ENCODE measurements at regions of chr17 and their contacts with region 1.

Region 1: DNA sequence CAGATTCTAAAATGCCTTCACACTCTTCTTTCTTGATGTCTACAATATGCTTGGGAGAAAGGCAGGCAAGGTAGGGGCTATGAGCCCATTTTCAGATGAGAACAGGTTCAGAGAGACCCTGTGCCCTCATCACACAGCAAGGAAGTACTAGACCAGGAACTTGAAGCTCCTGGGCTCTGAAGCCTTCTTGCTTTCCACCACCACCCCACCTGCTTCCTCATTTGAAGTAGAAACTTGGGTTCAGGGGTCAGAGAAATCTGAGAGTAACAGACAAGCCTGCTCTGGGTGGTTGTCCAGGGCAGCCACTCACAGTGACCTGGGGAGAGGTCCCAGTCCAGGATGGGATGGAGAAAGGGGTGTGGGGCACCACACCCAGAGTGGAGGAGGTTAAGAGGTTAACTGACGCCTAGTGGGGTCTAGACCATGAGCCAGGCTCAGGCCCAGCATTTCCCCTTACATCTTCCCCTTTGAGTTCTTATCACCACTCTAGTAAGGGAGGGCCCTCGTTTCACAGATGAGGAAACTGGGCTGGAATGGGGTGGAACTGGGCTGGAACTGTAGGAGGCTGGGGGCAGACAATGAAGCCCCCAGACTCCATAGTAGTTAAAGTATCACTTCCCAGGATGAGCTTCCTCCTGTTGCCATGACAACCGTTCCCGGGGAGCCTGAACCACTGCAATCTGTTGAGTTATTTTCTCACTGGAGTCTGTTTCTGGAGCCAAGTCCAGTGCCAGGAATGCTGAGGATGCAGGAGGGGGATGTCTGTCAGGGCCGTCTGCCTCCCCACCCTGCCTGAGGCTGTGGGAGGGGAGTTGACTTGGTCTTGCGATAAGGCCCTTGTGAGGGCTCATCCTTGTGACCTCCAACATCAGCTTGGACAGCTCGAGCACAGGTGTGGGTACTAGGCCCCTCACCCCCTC is 16.2 kb upstream of the PHF12 start:
- DNase-seq: peak; percentile 42
- ATAC-seq: peak in 1 of 2 donors; percentile 51
- H3K4me3 ChIP-seq: no peak overlapping the region
- H3K27ac ChIP-seq: no peak overlapping the region
- H3K4me1 ChIP-seq: peaks cover 6% of the 10 kb centered on the region
- H3K27me3 ChIP-seq: no peaks in the 10 kb centered on the region
- CTCF ChIP-seq: no peak

Region 2: GRCh38 chr17:29111816-29112499 is 144.5 kb after region 1 on chr17:
- intact Hi-C with region 1: loop called (anchors 5 kb)
- DNase-seq: peak; percentile 75
- ATAC-seq: peak; percentile 63 to 70
- H3K4me3 ChIP-seq: no peak overlapping the region
- H3K27ac ChIP-seq: no peak overlapping the region
- H3K4me1 ChIP-seq: peaks cover 25% of the 10 kb centered on the region
- H3K27me3 ChIP-seq: no peaks in the 10 kb centered on the region
- CTCF ChIP-seq: peak; percentile 90

Measured in lower lobe of right lung (tissue), 2 donors.